ENCODE measurements at regions of chr6 and their contacts with region 1.

Region 1: DNA sequence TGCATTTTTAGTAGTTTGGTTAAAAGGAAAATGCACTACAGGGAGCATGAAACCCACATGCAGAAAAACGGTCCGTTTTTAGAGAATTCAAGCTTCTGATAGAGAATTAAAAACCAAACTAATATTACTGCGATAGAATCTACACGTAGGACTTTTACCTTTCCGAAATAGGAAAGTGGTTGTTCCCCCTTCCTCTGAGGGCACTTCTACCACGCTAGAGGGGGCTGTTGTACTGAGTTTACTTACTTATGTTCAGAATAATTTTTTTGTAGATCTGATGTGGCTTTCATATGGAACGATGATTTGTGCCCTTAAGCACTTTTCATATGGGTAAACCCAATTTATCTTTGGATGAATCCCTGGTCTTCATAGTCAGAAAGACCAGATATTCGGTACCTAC is 264.3 kb upstream of the PLN start:
- DNase-seq: peak in 31 of 42 donors; percentile 14 to 80 (median 44)

Region 2: DNA sequence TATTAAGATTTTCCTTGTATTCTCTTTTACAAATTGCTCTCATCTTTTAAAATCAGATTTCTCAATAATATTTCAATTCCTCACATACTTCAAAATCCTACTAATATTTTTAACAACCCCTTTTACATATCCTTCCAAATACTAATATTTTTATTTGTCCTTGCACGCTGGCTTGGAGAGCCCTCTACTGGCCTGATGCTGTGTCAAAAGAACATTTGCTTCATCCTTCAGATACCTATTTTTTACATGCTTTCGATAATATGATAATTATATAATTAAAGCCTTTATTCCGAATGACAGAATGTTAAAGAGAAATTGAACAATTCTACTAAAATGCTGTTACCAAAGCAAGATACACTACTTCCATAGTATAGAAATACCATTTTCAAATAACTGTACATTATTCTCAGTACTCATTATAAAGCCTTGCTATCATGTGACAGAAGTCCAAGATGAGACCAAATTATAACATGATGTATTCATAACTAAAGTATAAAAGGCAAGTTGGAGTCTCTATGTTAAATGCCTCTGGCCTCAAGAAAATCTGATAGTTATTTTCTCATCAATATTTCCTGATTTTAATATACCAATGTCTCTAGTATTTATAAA is 225.3 kb after region 1 on chr6:
- intact Hi-C with region 1: loop called (anchors 5 kb)
- DNase-seq: peak in 41 of 42 donors; percentile 12 to 82 (median 58)

Region 3: DNA sequence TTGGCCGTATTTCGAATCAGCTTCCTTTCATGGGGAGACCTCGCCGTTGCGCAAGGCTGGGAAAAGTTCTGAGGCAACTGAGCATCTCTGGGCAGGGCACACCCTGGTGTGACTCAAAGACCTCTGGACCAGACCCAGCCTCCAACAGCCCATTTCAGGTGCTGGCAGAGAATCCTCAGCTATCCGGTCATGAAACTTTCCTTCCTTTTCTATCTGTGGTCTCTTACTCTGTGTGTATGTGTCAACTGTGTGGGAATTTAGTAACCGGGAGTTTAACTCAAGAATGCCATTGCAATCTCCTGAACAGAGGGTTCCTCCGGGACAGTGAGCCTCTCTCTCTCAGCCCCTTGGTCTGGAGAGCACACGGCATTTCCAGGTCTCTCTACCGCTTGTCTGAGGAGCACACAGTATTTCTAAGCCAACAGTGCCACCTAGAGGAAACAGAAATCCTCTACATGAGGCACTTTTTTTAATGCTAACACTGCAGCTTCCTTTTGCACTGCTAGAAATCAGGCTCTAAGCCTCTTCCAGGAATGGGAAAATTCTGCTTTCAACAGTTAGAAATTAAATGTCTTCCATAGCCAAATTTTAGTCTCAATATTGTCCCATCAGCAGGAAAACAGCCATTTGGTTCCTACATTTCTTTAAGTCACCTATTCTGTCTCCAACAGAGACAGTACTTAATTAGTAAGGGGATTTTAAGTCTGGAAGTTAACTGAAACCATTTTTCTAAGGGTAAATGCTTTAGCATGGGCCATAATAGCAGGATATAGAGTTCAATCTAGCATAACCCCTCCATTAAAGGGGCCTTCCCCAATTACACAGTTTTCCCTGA is 297.0 kb after region 1 on chr6:
- intact Hi-C with region 1: loop called (anchors 10 kb)
- DNase-seq: peak in 25 of 42 donors; percentile 13 to 79 (median 49)

Measured in head of caudate nucleus (tissue), 42 donors.